MCF 10A (cell line): ENCODE measurements at regions of chr17 and their contacts with region 1.

Region 1: DNA sequence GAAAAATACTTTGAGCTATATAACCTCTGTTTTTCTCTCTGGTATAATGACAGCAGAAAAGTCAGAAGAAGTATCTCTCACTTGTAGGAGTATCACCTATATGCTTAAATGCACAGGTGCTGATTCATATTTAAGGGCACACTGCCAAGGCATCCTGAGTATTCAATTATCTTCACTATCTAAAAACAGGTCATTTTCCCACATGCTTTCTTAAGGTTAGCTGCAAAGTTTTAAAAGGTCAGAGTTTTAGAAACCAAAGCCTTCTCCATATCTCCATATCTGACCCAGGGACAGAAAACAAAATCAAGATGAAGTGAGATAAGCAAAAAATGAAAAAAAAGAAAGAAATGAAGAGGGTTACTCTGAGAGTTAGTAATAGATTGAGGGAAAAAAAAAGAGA is 99.3 kb upstream of the C17orf78 start:
- DNase-seq: peak; percentile 77
- H3K4me3 Mint-ChIP-seq: no peak overlapping the region
- H3K27ac Mint-ChIP-seq: peak overlapping the region; percentile 46
- H3K4me1 Mint-ChIP-seq: peaks cover 8% of the 10 kb centered on the region
- H3K27me3 Mint-ChIP-seq: no peaks in the 10 kb centered on the region
- CTCF ChIP-seq: no peak

Region 2: DNA sequence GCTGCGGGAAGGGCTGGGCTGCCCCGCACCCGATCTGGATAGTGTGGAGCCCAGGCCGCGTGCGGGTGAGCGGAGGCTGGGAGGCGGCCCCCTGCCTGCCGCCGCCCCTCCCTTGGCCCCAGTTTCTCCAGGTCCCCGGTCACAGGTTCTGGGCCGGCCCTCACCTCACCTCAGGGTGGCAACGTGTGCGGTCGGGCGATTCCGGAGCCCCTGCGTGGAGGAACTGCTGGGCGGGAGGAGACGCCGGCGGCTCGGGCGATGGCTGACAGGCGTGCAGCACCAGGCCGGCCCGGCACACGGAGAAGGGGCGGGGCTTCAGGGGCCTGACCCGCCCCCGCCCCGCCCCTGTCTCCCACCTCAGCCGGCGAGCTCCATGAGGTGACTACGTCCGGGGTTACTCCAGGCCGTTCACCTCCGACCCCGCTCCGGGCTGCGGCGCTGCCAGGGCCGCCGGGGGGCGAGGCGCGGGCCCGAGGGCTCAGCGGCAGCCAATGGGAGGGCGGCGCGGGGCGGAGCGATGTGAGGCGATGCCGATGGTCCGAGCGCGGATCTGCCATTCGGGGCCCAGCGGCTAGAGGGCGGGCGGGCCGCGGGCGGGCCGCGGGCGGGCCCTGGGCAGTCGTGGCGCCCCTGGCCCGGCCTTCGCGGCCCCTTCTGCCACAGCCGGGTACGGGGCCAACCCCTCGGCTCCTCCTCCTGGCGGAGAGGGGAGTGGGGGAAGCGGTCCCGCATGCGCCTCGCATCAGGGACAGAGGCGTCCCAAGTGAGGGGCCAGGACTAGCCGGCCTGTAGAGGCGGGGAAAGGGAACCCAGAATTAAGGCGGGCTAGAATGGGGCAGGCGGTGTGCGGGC is 82.5 kb after region 1 on chr17:
- CTCF ChIA-PET with region 1: no interaction called
- POLR2A ChIA-PET with region 1: interaction called, 3 read pairs
- intact Hi-C with region 1: loop called (anchors 2 kb)
- DNase-seq: peak; percentile 96
- H3K4me3 Mint-ChIP-seq: peak overlapping the region; percentile 94
- H3K27ac Mint-ChIP-seq: peak overlapping the region; percentile 73
- H3K4me1 Mint-ChIP-seq: peaks cover 31% of the 10 kb centered on the region
- H3K27me3 Mint-ChIP-seq: no peaks in the 10 kb centered on the region
- CTCF ChIP-seq: peak; percentile 23